GM12878 (cell line): ENCODE measurements at regions of chr17 and their contacts with region 1.

Region 1: DNA sequence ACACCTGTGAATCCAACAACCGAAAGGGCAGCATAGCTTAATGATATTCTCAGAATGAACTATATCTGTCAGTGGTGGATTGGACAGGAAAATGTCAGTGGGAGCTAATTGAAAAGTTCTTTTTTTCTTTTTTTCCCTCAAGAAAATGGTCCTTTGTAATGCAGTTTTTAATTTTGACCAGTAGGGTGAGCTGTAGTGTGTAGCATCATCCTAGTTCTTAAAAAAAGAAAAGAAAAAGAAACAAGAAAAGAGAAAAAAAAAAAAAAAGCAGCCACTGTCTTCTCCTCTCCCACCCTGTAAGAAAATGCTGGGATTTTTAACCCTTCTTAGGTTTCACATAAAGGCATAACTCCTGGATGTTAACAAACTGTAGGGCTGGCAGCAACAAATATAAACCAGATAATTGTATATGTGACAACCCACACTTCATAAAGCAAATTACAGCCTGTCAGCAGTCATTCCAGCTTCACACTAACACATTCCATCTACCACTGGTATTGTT is 78.1 kb downstream of the SKAP1 start:
- DNase-seq: no peak
- ATAC-seq: peak; percentile 27; the same call in 2 of the 3 replicates
- H3K4me3 ChIP-seq: no peak overlapping the region
- H3K27ac ChIP-seq: no peak overlapping the region
- H3K4me1 ChIP-seq: no peaks in the 10 kb centered on the region
- H3K27me3 ChIP-seq: no peaks in the 10 kb centered on the region
- CTCF ChIP-seq: peak; percentile 39 to 66 (median 53); a peak in 5 of 6 replicates
- EP300 ChIP-seq: no peak
- POLR2A ChIP-seq: no peak
- RAD21 ChIP-seq: peak; percentile 86

Region 2: DNA sequence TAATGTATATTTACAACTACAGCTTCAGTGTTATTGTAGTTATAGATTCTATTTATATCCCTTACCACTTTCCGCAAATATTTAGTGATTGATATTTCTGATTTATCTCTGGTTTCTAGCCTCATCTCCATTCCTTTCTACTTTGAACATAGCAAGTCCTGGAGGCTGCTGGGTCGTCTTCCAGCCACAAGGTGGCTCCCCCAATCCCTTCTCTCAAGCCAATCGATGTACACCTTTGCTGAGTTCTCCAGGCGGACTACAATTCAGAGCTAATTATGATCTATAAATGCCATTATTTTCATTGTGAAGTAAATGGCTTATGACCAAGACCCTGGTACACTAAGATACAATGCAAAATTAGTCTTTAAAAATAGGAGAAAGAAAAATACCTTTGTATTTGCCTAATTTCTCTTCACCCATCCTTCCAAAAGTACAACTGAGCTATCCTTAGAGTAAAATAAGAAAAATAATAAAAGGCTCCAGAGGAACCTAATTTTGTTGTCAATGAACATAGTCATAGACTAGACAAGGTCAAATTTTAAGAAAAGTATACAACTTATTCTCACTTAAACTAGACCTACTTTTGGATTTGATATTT is 44.0 kb before region 1 on chr17:
- CTCF ChIA-PET with region 1: interaction called, 26 read pairs
- POLR2A ChIA-PET with region 1: no interaction called
- RAD21 ChIA-PET with region 1: interaction called, 8 read pairs
- SMC1A ChIA-PET with region 1: interaction called, 4 read pairs
- in situ Hi-C with region 1: no loop called
- intact Hi-C with region 1: no loop called
- DNase-seq: no peak
- ATAC-seq: peak; percentile 98
- H3K4me3 ChIP-seq: no peak overlapping the region
- H3K27ac ChIP-seq: no peak overlapping the region
- H3K4me1 ChIP-seq: peaks cover 8% of the 10 kb centered on the region; the same call in 1 of the 2 replicates
- H3K27me3 ChIP-seq: no peaks in the 10 kb centered on the region
- CTCF ChIP-seq: peak; percentile 69 to 89 (median 86)
- EP300 ChIP-seq: no peak
- POLR2A ChIP-seq: no peak
- RAD21 ChIP-seq: peak; percentile 66

Region 3: DNA sequence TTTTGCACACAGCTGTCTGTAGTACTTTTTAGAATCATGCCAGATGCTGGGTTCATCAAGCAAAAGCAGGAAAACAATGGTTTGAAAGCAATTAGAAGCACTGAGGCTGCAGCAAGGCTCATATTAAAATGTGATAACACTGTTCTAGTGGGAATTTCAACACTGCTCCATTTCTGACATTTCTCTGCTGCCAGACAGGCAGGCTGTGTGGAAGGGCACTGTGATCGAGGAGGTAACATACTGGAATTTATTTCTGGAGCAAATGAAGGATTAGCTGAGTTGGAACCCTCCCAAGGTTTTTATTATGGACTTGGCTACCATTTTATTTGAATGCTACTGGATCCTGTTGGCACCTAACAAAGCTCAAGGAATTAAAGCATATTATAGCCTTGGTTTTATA is 11.3 kb after region 1 on chr17:
- CTCF ChIA-PET with region 1: interaction called, 36 read pairs
- POLR2A ChIA-PET with region 1: interaction called, 3 read pairs
- RAD21 ChIA-PET with region 1: interaction called, 9 read pairs
- SMC1A ChIA-PET with region 1: interaction called, 18 read pairs
- in situ Hi-C with region 1: no loop called
- intact Hi-C with region 1: no loop called
- DNase-seq: no peak
- ATAC-seq: no peak
- H3K4me3 ChIP-seq: no peak overlapping the region
- H3K27ac ChIP-seq: no peak overlapping the region
- H3K4me1 ChIP-seq: no peaks in the 10 kb centered on the region
- H3K27me3 ChIP-seq: no peaks in the 10 kb centered on the region
- CTCF ChIP-seq: no peak
- EP300 ChIP-seq: no peak
- POLR2A ChIP-seq: no peak
- RAD21 ChIP-seq: no peak

Region 4: GRCh38 chr17:48406936-48407567 is 55.2 kb after region 1 on chr17:
- CTCF ChIA-PET with region 1: interaction called, 11 read pairs
- POLR2A ChIA-PET with region 1: no interaction called
- RAD21 ChIA-PET with region 1: no interaction called
- SMC1A ChIA-PET with region 1: interaction called, 4 read pairs
- in situ Hi-C with region 1: no loop called
- intact Hi-C with region 1: no loop called
- DNase-seq: no peak
- ATAC-seq: no peak; the same call in 2 of the 3 replicates
- H3K4me3 ChIP-seq: no peak overlapping the region
- H3K27ac ChIP-seq: 0 out of 2 replicates have a peak overlapping the region, but pooled peaks have one; percentile 43
- H3K4me1 ChIP-seq: peaks cover 5% of the 10 kb centered on the region; the same call in 1 of the 2 replicates
- H3K27me3 ChIP-seq: no peaks in the 10 kb centered on the region
- CTCF ChIP-seq: no peak
- EP300 ChIP-seq: no peak
- POLR2A ChIP-seq: no peak
- RAD21 ChIP-seq: no peak

Region 5: DNA sequence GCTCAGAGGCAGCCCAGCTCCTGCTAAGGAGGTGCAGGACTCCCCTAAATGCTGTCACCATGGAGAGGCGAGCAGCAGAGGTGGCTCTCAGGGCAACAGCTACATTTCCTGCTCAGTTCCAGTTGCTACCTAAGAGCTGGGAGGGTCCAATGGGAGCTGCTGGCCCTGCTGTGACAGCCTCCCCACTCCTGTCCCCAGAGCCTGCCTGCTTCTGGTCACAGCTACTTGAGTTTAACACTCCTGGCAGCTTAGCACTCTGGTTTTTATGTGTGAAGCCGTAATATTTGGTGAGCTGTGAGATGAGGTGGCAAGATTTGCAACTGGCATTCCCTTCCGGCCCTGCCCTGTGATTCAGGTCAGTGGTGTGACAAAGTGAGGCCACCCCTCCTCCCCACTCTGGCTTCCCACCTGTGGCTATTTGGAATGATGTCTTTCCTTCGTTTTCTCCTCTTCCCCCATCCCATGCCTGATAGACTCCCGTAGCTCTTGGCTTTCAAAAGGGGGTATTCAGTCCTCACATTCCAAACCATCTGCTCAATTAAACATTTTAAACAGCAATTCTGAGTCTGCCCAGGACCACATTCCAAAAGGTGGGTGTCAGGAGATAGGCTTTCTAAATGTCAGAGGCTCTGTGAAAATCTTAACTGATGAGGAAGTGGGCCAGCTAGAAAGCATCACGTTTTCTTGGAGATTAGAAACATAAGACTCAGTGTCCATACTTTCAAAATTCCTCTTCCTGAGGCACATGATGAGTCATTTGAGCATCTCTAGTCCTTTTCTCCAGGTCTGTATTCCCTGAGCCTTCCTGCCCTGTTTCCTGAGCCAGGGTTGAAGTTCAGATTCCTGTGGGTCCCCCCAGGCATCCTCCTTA is 120.8 kb after region 1 on chr17:
- CTCF ChIA-PET with region 1: interaction called, 9 read pairs
- POLR2A ChIA-PET with region 1: no interaction called
- RAD21 ChIA-PET with region 1: interaction called, 16 read pairs
- SMC1A ChIA-PET with region 1: interaction called, 24 read pairs
- in situ Hi-C with region 1: no loop called
- intact Hi-C with region 1: no loop called
- DNase-seq: no peak
- ATAC-seq: peak; percentile 95
- H3K4me3 ChIP-seq: 0 out of 2 replicates have a peak overlapping the region, but pooled peaks have one; percentile 17
- H3K27ac ChIP-seq: no peak overlapping the region
- H3K4me1 ChIP-seq: peaks cover 16% of the 10 kb centered on the region
- H3K27me3 ChIP-seq: no peaks in the 10 kb centered on the region
- CTCF ChIP-seq: no peak
- EP300 ChIP-seq: peak; percentile 36 to 55; a peak in 1 of 4 replicates
- POLR2A ChIP-seq: no peak
- RAD21 ChIP-seq: no peak

Region 6: DNA sequence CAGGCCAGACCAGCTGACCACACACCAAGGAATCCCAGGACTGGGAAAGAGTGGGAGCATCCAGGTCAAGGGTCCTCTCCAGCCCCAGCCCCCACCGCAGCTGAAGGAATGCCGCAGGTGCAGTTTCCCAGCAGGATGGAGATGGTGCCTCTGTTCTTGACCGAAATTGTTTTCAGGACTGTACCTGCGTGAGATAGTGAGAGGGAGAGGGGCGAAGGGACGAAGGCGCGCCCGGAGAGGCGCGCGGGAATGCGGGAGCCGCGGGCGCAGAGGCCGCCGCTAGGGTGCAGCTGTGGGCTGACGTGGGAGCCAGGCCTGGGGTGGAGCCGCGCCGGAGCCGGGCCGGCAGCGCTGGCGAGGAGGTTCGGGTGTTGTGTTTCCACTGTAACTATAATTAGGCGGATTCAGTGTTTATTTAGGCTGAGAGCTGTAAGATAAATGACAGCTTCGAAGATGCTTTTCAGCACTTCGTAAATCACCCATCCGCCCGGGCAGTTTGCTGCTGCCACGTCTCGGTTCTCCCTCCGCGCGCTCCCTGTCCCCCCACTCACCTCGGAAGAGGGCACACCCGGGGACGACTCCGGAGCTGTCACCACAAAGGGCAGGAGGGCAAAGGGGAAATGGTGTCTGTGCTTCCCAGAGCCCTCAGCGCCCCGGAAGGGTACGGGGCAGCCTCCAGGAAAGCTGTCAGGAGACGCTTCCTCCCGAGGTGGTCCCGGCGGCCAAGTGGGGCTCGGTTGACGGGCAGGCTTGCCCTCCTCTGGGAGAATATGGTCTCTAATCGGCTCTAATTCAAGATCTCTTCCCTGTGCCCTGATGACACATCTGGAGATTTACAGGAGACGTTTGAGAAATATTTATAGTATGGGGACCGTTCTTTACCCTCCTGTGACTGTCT is 140.8 kb after region 1 on chr17:
- CTCF ChIA-PET with region 1: interaction called, 36 read pairs
- POLR2A ChIA-PET with region 1: no interaction called
- RAD21 ChIA-PET with region 1: interaction called, 19 read pairs
- SMC1A ChIA-PET with region 1: interaction called, 15 read pairs
- in situ Hi-C with region 1: no loop called
- intact Hi-C with region 1: no loop called
- DNase-seq: no peak
- ATAC-seq: peak; percentile 98
- H3K4me3 ChIP-seq: peak overlapping the region; percentile 51; the same call in 1 of the 2 replicates
- H3K27ac ChIP-seq: no peak overlapping the region
- H3K4me1 ChIP-seq: peaks cover 20% of the 10 kb centered on the region
- H3K27me3 ChIP-seq: no peaks in the 10 kb centered on the region
- CTCF ChIP-seq: peak; percentile 84 to 94 (median 90)
- EP300 ChIP-seq: no peak
- POLR2A ChIP-seq: no peak
- RAD21 ChIP-seq: peak; percentile 79

Region 7: GRCh38 chr17:48586355-48587258 is 234.7 kb after region 1 on chr17:
- CTCF ChIA-PET with region 1: interaction called, 20 read pairs
- POLR2A ChIA-PET with region 1: interaction called, 4 read pairs
- RAD21 ChIA-PET with region 1: interaction called, 10 read pairs
- SMC1A ChIA-PET with region 1: interaction called, 6 read pairs
- in situ Hi-C with region 1: no loop called
- intact Hi-C with region 1: no loop called
- DNase-seq: no peak
- ATAC-seq: peak; percentile 59
- H3K4me3 ChIP-seq: peak overlapping the region; percentile 64
- H3K27ac ChIP-seq: no peak overlapping the region
- H3K4me1 ChIP-seq: peaks cover 3% of the 10 kb centered on the region
- H3K27me3 ChIP-seq: peaks cover 0 to 4% of the 10 kb centered on the region in 2 experiments; a peak in 1 of 4 replicates
- CTCF ChIP-seq: no peak
- EP300 ChIP-seq: no peak
- POLR2A ChIP-seq: no peak
- RAD21 ChIP-seq: no peak